HEK293 (cell line): ENCODE measurements at regions of chr5 and their contacts with region 1.

Region 1: DNA sequence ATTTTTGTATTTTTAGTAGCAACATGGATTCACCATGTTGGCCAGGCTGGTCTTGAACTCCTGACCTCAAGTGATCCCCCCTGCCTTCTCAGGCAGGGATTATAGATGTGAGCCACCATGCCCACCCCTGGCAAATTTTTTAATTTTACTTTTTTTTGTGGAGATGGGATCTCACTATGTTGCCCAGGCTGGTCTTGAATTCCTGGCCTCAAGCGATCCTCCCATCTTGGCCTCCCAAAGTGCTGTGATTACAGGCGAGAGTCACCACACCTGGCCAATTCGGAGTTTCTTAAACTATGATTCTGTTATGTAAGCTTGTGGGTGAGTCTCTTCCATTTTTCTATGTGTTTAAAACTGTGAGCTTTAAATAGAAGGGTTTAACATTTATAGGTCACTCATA is 27.6 kb downstream of the PCBD2 start:
- H3K4me3 ChIP-seq: no peak overlapping the region
- H3K27ac ChIP-seq: no peak overlapping the region
- H3K4me1 ChIP-seq: no peaks in the 10 kb centered on the region
- CTCF ChIP-seq: no peak

Region 2: GRCh38 chr5:134732819-134733218 is 199.7 kb before region 1 on chr5:
- CTCF ChIA-PET with region 1: no interaction called
- POLR2A ChIA-PET with region 1: no interaction called
- H3K4me3 ChIP-seq: no peak overlapping the region
- H3K27ac ChIP-seq: no peak overlapping the region
- H3K4me1 ChIP-seq: no peaks in the 10 kb centered on the region
- CTCF ChIP-seq: no peak

Region 3: DNA sequence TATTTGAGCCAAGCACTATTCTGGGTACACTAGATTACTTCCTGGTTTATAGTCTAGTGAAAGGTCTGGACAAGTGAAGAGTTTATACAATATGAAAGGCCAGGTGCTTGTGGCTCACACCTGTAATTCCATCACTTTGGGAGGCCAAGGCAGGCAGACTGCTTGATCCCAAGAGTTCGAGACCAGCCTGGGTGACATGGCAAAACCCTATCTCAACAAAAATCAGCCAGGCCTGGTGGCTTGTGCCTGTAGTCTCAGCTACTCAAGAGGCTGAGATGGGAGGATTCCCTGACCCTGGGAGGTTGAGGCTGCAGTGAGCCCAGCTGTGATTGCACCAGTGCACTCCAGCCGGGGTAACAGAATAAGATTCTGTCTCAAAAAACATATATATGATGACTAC is 67.8 kb before region 1 on chr5:
- CTCF ChIA-PET with region 1: no interaction called
- POLR2A ChIA-PET with region 1: no interaction called
- H3K4me3 ChIP-seq: no peak overlapping the region
- H3K27ac ChIP-seq: no peak overlapping the region
- H3K4me1 ChIP-seq: no peaks in the 10 kb centered on the region
- CTCF ChIP-seq: no peak

Region 4: GRCh38 chr5:134917070-134917815 is 15.3 kb before region 1 on chr5:
- CTCF ChIA-PET with region 1: interaction called, 17 read pairs
- POLR2A ChIA-PET with region 1: no interaction called
- H3K4me3 ChIP-seq: no peak overlapping the region
- H3K27ac ChIP-seq: no peak overlapping the region
- H3K4me1 ChIP-seq: no peaks in the 10 kb centered on the region
- CTCF ChIP-seq: no peak

Region 5: GRCh38 chr5:134944630-134945029 is 12.1 kb after region 1 on chr5:
- CTCF ChIA-PET with region 1: no interaction called
- POLR2A ChIA-PET with region 1: no interaction called
- H3K4me3 ChIP-seq: no peak overlapping the region
- H3K27ac ChIP-seq: no peak overlapping the region
- H3K4me1 ChIP-seq: peaks cover 3% of the 10 kb centered on the region; the same call in 1 of the 2 replicates
- CTCF ChIP-seq: no peak

Region 6: GRCh38 chr5:135072387-135073281 is 140.1 kb after region 1 on chr5:
- CTCF ChIA-PET with region 1: no interaction called
- POLR2A ChIA-PET with region 1: no interaction called
- H3K4me3 ChIP-seq: no peak overlapping the region
- H3K27ac ChIP-seq: no peak overlapping the region
- H3K4me1 ChIP-seq: no peaks in the 10 kb centered on the region
- CTCF ChIP-seq: no peak